PC-9 (cell line): ENCODE measurements at regions of chr18 and their contacts with region 1.

Region 1: GRCh38 chr18:66640431-66640830 is 36.5 kb upstream of the CDH19 start:
- DNase-seq: no peak
- H3K4me3 ChIP-seq: no peak overlapping the region
- H3K27ac ChIP-seq: no peak overlapping the region
- H3K4me1 ChIP-seq: no peaks in the 10 kb centered on the region
- H3K27me3 ChIP-seq: no peaks in the 10 kb centered on the region
- CTCF ChIP-seq: no peak

Region 2: GRCh38 chr18:66655407-66655806 is 15.0 kb after region 1 on chr18:
- CTCF ChIA-PET with region 1: no interaction called
- POLR2A ChIA-PET with region 1: interaction called, 29 read pairs
- intact Hi-C with region 1: no loop called
- DNase-seq: no peak
- H3K4me3 ChIP-seq: no peak overlapping the region
- H3K27ac ChIP-seq: no peak overlapping the region
- H3K4me1 ChIP-seq: no peaks in the 10 kb centered on the region
- H3K27me3 ChIP-seq: no peaks in the 10 kb centered on the region
- CTCF ChIP-seq: no peak

Region 3: DNA sequence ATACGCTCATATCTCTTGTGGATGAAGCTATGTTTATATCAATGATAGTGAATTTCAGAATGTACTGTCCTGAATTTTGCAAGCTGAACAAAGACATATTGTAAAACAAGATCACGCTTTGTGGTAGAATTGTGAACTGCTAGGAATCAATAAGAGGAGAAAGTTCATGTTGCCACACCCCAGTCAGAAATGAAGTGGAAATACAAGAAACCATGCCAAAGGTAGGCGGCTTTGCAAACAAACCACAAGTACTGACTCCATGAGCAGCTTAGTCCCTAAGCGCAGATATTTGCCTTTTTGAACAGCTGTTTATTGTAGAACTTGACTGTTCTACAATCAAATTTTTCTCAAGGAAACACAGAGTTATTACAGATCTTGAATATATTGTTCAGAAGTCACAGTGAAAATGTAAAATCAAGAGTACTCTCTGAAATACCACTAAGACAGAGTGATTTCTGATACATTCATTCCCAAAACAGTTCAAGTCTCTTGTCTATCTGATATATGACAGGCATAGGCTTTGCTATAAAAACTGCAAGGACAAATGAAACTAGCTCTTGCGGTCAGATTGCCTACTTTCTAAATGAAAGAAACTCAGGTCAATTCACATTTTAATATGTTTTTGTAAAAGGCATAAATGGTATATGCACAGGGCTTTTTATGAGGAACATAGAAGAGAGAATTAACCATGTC is 84.4 kb after region 1 on chr18:
- CTCF ChIA-PET with region 1: no interaction called
- POLR2A ChIA-PET with region 1: no interaction called
- intact Hi-C with region 1: loop called (anchors 10 kb)
- DNase-seq: peak; percentile 10 to 76
- H3K4me3 ChIP-seq: no peak overlapping the region; the same call in 1 of the 2 replicates
- H3K27ac ChIP-seq: no peak overlapping the region
- H3K4me1 ChIP-seq: peaks cover 21% of the 10 kb centered on the region
- H3K27me3 ChIP-seq: no peaks in the 10 kb centered on the region
- CTCF ChIP-seq: no peak

Region 4: GRCh38 chr18:67183398-67183797 is 543.0 kb after region 1 on chr18:
- CTCF ChIA-PET with region 1: no interaction called
- POLR2A ChIA-PET with region 1: no interaction called
- intact Hi-C with region 1: no loop called
- DNase-seq: no peak
- H3K4me3 ChIP-seq: no peak overlapping the region
- H3K27ac ChIP-seq: no peak overlapping the region
- H3K4me1 ChIP-seq: no peaks in the 10 kb centered on the region
- H3K27me3 ChIP-seq: no peaks in the 10 kb centered on the region
- CTCF ChIP-seq: no peak